ENCODE measurements at regions of chr17 and their contacts with region 1.

Region 1: GRCh38 chr17:6831661-6832263 is at the start of gene TEKT1:
- DNase-seq: peak; percentile 79 to 93
- H3K4me3 ChIP-seq: no peak within 1 kb of the TSS
- CTCF ChIP-seq: no peak
- POLR2A ChIP-seq: no peak
- total RNA-seq, gene TEKT1: not detected

Region 2: GRCh38 chr17:6677158-6677831 is 154.5 kb before region 1 on chr17:
- intact Hi-C with region 1: loop called (anchors 10 kb)
- DNase-seq: no peak
- H3K4me3 ChIP-seq: no peak overlapping the region
- CTCF ChIP-seq: no peak
- POLR2A ChIP-seq: no peak

Measured in lower leg skin (tissue), 4 donors.